ENCODE measurements at regions of chr2 and their contacts with region 1.

Region 1: DNA sequence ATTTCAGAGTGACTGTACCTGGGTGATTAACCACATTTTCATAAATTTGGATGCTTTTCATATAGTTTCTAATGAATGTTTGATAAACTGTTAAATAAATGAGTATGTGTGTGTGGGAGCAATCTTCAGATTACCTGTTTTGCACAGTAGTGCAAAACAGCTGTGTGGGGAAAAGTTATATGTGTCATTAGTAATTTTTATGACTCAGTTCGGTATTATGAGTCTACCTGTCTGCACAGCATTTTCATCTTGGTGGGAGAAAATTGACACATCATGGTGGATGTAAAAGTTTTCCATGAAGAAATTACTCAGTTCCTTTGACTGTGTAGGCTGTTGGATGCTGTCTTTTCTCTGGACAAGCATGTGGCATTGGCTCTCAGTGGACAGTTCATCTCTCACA is 43.8 kb downstream of the LTBP1 start:
- DNase-seq: no peak
- ATAC-seq: no peak
- H3K4me3 ChIP-seq: no peak overlapping the region
- H3K4me3 Mint-ChIP-seq: no peak overlapping the region
- H3K27ac ChIP-seq: no peak overlapping the region
- H3K27ac Mint-ChIP-seq: no peak overlapping the region
- H3K4me1 ChIP-seq: no peaks in the 10 kb centered on the region
- H3K4me1 Mint-ChIP-seq: no peaks in the 10 kb centered on the region
- H3K27me3 ChIP-seq: no peaks in the 10 kb centered on the region
- H3K27me3 Mint-ChIP-seq: peaks cover 17% of the 10 kb centered on the region
- CTCF ChIP-seq: no peak

Region 2: GRCh38 chr2:32915694-32916093 is 74.9 kb before region 1 on chr2:
- CTCF ChIA-PET with region 1: no interaction called
- POLR2A ChIA-PET with region 1: no interaction called
- intact Hi-C with region 1: loop called in 1 of 2 experiments (anchors 2 kb)
- DNase-seq: no peak
- ATAC-seq: no peak
- H3K4me3 ChIP-seq: no peak overlapping the region
- H3K4me3 Mint-ChIP-seq: no peak overlapping the region
- H3K27ac ChIP-seq: no peak overlapping the region
- H3K27ac Mint-ChIP-seq: no peak overlapping the region
- H3K4me1 ChIP-seq: no peaks in the 10 kb centered on the region
- H3K4me1 Mint-ChIP-seq: no peaks in the 10 kb centered on the region
- H3K27me3 ChIP-seq: no peaks in the 10 kb centered on the region
- H3K27me3 Mint-ChIP-seq: peaks cover 9% of the 10 kb centered on the region
- CTCF ChIP-seq: no peak